HEK293 (cell line): ENCODE measurements at regions of chr10 and their contacts with region 1.

Region 1: DNA sequence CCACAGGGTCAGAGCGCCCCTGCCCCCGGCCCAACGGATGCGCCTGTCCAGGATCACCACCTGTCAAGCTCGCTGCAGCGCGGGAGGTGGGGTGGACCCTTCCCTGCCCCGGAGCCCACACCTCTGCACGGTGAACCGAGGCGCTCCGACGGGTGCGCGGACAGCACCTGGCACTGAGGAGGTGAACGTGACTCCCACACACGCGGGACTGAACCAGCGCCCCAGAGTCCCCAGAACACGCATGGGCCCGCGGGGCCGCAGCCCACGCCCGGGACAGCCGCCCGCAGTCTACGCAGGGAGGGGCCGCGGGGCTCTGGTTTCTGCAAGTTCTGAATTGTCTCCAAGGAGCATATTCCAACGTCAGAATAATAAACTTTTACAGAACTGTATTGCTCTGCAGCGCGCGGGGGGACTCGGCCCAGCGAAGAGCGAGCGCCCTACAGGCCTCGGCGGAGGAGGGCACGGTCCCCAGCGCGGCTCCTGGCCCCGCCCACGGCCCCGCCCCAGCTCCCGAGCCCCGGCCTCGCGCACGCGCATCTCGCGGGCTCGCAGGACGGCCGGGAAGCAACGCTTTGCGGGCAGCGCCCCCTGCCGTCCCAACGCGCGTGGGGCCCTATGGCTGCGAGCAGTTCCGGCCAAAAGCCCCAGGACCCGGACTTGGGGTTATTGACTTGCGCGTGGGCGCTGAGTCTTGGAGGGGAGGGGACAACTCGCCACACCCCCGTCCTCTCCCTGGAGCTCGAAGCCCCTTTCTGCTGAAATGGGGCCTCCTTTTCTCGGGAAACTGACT is 29.7 kb downstream of the OAT start:
- H3K4me3 ChIP-seq: no peak overlapping the region
- H3K27ac ChIP-seq: no peak overlapping the region; the same call in 1 of the 2 replicates
- H3K4me1 ChIP-seq: no peaks in the 10 kb centered on the region; the same call in 1 of the 2 replicates
- CTCF ChIP-seq: peak; percentile 74; the same call in 1 of the 2 replicates

Region 2: GRCh38 chr10:123582084-123582989 is 806.7 kb before region 1 on chr10:
- CTCF ChIA-PET with region 1: interaction called, 15 read pairs
- POLR2A ChIA-PET with region 1: no interaction called
- H3K4me3 ChIP-seq: no peak overlapping the region
- H3K27ac ChIP-seq: no peak overlapping the region
- H3K4me1 ChIP-seq: 0 out of 2 replicates have a peak, but pooled peaks cover 2% of the 10 kb centered on the region
- CTCF ChIP-seq: peak; percentile 64

Region 3: DNA sequence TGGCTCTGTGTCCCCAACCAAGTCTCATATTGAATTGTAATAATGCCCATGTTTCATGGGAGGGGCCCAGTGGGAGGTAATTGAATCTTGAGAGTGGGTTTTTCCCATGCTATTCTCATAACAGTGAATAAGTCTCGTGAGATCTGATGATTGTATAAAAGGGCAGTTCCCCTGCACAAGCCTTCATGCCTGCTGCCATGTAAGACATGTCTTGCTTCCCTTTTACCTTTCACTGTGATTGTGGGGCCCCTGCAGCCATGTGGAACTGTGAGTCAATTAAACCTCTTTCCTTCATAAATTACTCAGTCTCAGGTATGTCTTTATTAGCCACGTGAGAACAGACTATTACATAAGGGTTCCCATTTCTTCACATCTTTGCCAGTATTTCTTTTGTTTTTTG is 400.3 kb before region 1 on chr10:
- CTCF ChIA-PET with region 1: interaction called, 160 read pairs
- POLR2A ChIA-PET with region 1: no interaction called
- H3K4me3 ChIP-seq: no peak overlapping the region
- H3K27ac ChIP-seq: no peak overlapping the region
- H3K4me1 ChIP-seq: no peaks in the 10 kb centered on the region
- CTCF ChIP-seq: no peak

Region 4: DNA sequence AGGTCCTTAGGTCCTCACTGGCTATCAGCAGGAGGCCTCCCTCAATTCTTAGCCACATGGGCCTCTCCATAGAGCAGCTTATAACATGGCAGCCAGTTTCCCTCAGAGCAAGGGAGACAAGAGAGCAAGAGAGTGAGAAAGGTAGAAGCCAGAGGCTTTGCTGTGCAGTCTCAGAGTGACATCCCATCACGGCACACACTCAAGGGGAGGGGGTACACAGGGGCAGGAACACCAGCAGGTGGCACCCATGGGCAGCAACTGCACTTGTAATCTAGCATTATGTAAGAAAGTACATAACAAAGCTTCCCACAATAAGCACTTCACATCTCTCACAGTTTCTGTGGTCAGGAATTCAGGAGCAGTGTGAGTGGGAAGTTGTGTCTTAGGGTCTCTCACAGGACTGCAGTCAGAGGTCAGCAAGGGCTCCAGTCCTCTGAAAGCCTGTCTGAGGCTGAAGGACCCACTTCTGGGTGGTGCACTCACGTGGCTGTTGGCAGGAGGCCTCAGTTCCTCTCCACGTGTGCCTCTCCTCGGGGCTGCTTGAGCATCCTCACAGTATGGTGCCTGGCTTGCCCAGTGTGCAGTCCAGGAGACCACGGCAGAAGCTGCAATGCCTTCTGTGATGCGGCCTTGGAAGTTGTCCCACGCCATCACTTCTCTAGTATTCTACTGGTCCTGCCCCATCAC is 129.7 kb before region 1 on chr10:
- CTCF ChIA-PET with region 1: interaction called, 12 read pairs
- POLR2A ChIA-PET with region 1: no interaction called
- H3K4me3 ChIP-seq: no peak overlapping the region
- H3K27ac ChIP-seq: no peak overlapping the region
- H3K4me1 ChIP-seq: no peaks in the 10 kb centered on the region
- CTCF ChIP-seq: no peak

Region 5: GRCh38 chr10:124289851-124290795 is 98.9 kb before region 1 on chr10:
- CTCF ChIA-PET with region 1: interaction called, 10 read pairs
- POLR2A ChIA-PET with region 1: no interaction called
- H3K4me3 ChIP-seq: no peak overlapping the region
- H3K27ac ChIP-seq: no peak overlapping the region
- H3K4me1 ChIP-seq: no peaks in the 10 kb centered on the region
- CTCF ChIP-seq: no peak

Region 6: DNA sequence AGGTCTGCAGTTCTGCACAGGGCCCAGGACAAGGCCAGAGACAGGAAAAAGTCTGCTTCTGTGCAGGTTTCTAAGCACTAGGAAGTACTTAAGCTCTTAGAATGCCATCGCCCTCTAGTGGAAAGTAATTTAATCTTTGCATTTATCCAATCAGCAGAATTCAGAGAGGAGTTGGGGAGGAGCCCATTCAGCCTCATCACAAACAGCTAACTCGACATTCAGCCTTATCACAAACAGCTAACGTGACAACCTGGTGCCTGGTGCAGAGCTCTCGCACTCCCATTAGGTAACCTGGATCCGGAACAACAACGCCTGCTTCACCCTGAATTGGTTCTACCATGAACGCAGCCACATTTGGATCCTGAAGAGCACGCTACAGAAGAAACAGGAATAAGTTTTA is 14.5 kb after region 1 on chr10:
- CTCF ChIA-PET with region 1: interaction called, 16 read pairs
- POLR2A ChIA-PET with region 1: interaction called, 3 read pairs
- H3K4me3 ChIP-seq: no peak overlapping the region
- H3K27ac ChIP-seq: no peak overlapping the region
- H3K4me1 ChIP-seq: no peaks in the 10 kb centered on the region
- CTCF ChIP-seq: 0 out of 2 replicates have a peak, but pooled peaks have one; percentile 27

Region 7: DNA sequence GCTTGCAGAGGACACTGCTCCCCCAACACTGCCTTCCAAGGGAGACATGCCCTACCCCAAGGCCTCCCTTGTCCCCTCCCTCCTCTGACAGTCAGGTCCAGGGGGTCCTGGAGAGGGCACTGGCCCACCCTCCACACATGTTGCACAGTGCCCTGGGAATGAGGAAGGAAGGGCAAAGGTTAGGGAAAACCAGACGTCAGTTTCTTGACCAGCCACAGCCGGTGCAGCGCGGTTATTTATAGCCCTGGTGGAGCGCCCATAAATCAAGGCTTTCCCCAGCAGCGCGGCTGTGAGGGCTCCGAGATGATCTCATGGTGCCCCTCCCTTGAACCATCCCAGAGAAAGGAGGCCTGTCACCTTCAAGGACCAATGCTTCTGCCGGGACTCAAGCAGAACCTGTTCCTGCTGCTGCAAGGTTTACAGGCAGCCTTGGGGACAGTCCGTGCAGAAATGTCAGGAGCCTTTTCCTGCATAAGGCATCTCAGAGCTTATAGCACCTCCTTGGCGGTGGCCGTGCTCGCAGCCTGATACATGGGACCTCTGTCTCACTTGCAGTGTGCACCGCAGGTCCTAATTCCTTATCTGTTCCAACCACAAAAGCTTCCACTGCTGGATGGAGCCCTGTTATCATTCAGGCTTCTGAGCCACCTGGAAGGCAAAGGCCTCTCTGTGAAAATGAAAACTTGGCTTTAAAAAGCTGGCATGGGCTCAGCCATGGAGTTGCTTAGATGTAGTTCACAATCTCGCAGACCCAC is 199.9 kb after region 1 on chr10:
- CTCF ChIA-PET with region 1: no interaction called
- POLR2A ChIA-PET with region 1: no interaction called
- H3K4me3 ChIP-seq: no peak overlapping the region
- H3K27ac ChIP-seq: no peak overlapping the region
- H3K4me1 ChIP-seq: no peaks in the 10 kb centered on the region
- CTCF ChIP-seq: no peak